K562 (cell line): ENCODE measurements at regions of chr3 and their contacts with region 1.

Region 1: GRCh38 chr3:14178247-14179113 is at the starts of genes LSM3 and XPC:
- DNase-seq: peak; percentile 95 to 99 (median 96)
- ATAC-seq: peak; percentile 96
- H3K4me3 ChIP-seq: peak within 1 kb of the TSS; percentile 65
- H3K27ac ChIP-seq: peak within 1 kb of the TSS; percentile 89
- H3K4me1 ChIP-seq: peaks cover 13 to 41% of the 10 kb centered on the region in 2 experiments
- H3K27me3 ChIP-seq: no peaks in the 10 kb centered on the region
- CTCF ChIP-seq: peak in 2 of 3 experiments; percentile 1 to 19; a peak in 1 of 6 replicates
- EP300 ChIP-seq: no peak
- POLR2A ChIP-seq: peak; percentile 98
- RAD21 ChIP-seq: no peak
- polyA plus RNA-seq, gene LSM3: 180 to 203 TPM
- polyA plus RNA-seq, gene XPC: 3.8 to 4.1 TPM

Region 2: GRCh38 chr3:14144423-14145075 is 33.9 kb before region 1 on chr3:
- CTCF ChIA-PET with region 1: no interaction called
- POLR2A ChIA-PET with region 1: interaction called, 11 read pairs
- in situ Hi-C with region 1: no loop called
- intact Hi-C with region 1: no loop called
- DNase-seq: peak; percentile 85 to 87 (median 86)
- ATAC-seq: peak; percentile 85
- H3K4me3 ChIP-seq: no peak overlapping the region
- H3K27ac ChIP-seq: peak overlapping the region; percentile 67; the same call in 2 of the 3 replicates
- H3K4me1 ChIP-seq: peaks cover 13 to 14% of the 10 kb centered on the region in 2 experiments
- H3K27me3 ChIP-seq: no peaks in the 10 kb centered on the region
- CTCF ChIP-seq: no peak
- EP300 ChIP-seq: peak; percentile 56
- POLR2A ChIP-seq: no peak
- RAD21 ChIP-seq: no peak

Region 3: GRCh38 chr3:14166877-14167603 is 11.4 kb before region 1 on chr3:
- CTCF ChIA-PET with region 1: no interaction called
- POLR2A ChIA-PET with region 1: interaction called, 15 read pairs
- in situ Hi-C with region 1: no loop called
- intact Hi-C with region 1: no loop called
- DNase-seq: no peak
- ATAC-seq: no peak
- H3K4me3 ChIP-seq: no peak overlapping the region
- H3K27ac ChIP-seq: no peak overlapping the region
- H3K4me1 ChIP-seq: no peaks in the 10 kb centered on the region
- H3K27me3 ChIP-seq: no peaks in the 10 kb centered on the region
- CTCF ChIP-seq: no peak
- EP300 ChIP-seq: no peak
- POLR2A ChIP-seq: no peak
- RAD21 ChIP-seq: no peak